ENCODE measurements at regions of chr17 and their contacts with region 1.

Region 1: GRCh38 chr17:50956750-50957523 is 90.8 kb upstream of the TOB1 start:
- DNase-seq: peak; percentile 83
- H3K4me3 Mint-ChIP-seq: no peak overlapping the region
- H3K27ac Mint-ChIP-seq: peak overlapping the region; percentile 53
- H3K4me1 Mint-ChIP-seq: peaks cover 2% of the 10 kb centered on the region
- H3K27me3 Mint-ChIP-seq: no peaks in the 10 kb centered on the region

Region 2: GRCh38 chr17:50547035-50547735 is 409.8 kb before region 1 on chr17 and contains the start of gene SPATA20:
- CTCF ChIA-PET with region 1: no interaction called
- intact Hi-C with region 1: loop called (anchors 1 kb)
- DNase-seq: peak; percentile 92
- H3K4me3 Mint-ChIP-seq: peak within 1 kb of the TSS; percentile 74
- H3K27ac Mint-ChIP-seq: peak within 1 kb of the TSS; percentile 67
- H3K4me1 Mint-ChIP-seq: peaks cover 9% of the 10 kb centered on the region
- H3K27me3 Mint-ChIP-seq: peaks cover 2% of the 10 kb centered on the region
- total RNA-seq, gene SPATA20: 15.8 to 16.1 TPM

Region 3: DNA sequence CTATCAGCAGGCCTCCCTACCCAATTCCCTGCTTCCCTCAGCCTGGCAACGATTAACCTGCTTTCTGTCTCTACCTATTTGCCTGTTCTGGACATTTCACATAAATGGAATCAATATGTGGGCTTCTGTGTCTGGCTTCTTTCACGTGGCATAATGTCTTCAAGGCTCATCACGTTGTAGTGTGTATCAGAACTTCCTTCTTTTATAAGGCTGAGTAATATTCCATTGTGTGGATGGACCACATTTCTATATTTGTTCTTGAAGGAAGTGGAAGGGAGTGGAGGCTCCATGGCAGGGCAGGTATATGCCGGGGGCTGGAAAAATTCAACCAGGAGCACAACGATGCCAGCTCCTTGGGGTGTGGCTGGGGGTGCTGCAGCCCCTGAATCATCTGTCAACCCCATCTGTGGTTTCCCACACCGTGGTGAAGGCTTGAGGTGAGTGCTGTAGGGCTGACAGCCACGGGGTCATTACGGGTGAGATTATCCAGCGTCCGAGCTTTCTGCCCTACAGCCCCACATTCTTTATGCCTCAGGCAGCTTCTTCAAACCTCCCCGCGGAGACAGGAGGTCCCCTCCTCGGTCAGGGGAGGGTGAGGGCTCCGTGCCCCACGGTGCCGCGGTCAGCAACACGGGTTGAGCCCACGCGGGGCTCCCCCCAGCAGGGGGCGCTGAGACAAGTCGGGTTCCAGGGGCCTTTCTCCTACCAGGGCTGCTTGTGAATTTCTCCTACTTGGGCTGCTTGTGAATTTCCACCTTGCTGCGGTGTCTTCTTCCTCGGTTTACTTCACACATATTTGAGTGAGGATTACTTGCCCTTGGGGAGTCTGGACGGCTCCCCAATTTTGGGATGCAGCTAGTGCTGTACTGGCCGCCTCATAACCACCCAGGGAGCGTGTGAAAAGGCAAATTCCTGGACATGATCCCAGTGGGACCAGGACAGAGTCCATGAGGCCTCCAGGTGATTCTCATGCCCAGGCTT is 139.9 kb before region 1 on chr17:
- CTCF ChIA-PET with region 1: interaction called, 4 read pairs
- intact Hi-C with region 1: loop called (anchors 1 kb)
- DNase-seq: peak; percentile 59
- H3K4me3 Mint-ChIP-seq: no peak overlapping the region
- H3K27ac Mint-ChIP-seq: no peak overlapping the region
- H3K4me1 Mint-ChIP-seq: no peaks in the 10 kb centered on the region
- H3K27me3 Mint-ChIP-seq: no peaks in the 10 kb centered on the region

Region 4: DNA sequence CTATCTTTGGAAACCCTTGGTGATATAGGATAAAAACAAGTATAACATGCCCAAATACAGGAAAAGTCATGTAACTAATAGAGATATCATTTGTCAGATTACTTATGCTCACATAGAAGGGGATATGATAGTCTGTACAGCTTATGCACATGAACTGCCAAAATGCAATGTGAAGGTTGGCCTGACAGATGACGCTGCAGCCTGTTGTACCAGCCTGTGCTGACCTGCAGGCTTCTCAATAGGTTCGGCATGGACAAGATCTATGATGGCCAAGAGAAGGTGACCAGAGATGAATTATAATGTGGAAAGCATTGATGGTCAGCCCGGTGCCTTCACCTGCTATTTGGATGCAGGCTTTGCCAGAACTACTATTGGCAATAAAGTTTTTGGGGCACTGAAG is 108.9 kb before region 1 on chr17:
- CTCF ChIA-PET with region 1: interaction called, 83 read pairs
- intact Hi-C with region 1: loop called (anchors 1 kb)
- DNase-seq: no peak
- H3K4me3 Mint-ChIP-seq: no peak overlapping the region
- H3K27ac Mint-ChIP-seq: no peak overlapping the region
- H3K4me1 Mint-ChIP-seq: peaks cover 14% of the 10 kb centered on the region
- H3K27me3 Mint-ChIP-seq: no peaks in the 10 kb centered on the region

Region 5: GRCh38 chr17:50861071-50861676 is 95.8 kb before region 1 on chr17:
- CTCF ChIA-PET with region 1: interaction called, 22 read pairs
- intact Hi-C with region 1: no loop called
- DNase-seq: no peak
- H3K4me3 Mint-ChIP-seq: no peak overlapping the region
- H3K27ac Mint-ChIP-seq: no peak overlapping the region
- H3K4me1 Mint-ChIP-seq: peaks cover 39% of the 10 kb centered on the region
- H3K27me3 Mint-ChIP-seq: no peaks in the 10 kb centered on the region

Region 6: GRCh38 chr17:50899005-50899460 is 57.9 kb before region 1 on chr17:
- CTCF ChIA-PET with region 1: no interaction called
- intact Hi-C with region 1: no loop called
- DNase-seq: no peak
- H3K4me3 Mint-ChIP-seq: no peak overlapping the region
- H3K27ac Mint-ChIP-seq: no peak overlapping the region
- H3K4me1 Mint-ChIP-seq: peaks cover 33% of the 10 kb centered on the region
- H3K27me3 Mint-ChIP-seq: no peaks in the 10 kb centered on the region

Region 7: GRCh38 chr17:51054748-51055147 is 97.8 kb after region 1 on chr17:
- CTCF ChIA-PET with region 1: no interaction called
- intact Hi-C with region 1: no loop called
- DNase-seq: no peak
- H3K4me3 Mint-ChIP-seq: no peak overlapping the region
- H3K27ac Mint-ChIP-seq: no peak overlapping the region
- H3K4me1 Mint-ChIP-seq: no peaks in the 10 kb centered on the region
- H3K27me3 Mint-ChIP-seq: no peaks in the 10 kb centered on the region